ENCODE measurements at regions of chr10 and their contacts with region 1.

Region 1: GRCh38 chr10:30059209-30060107 is at the start of gene JCAD:
- DNase-seq: no peak
- H3K4me3 ChIP-seq: peak within 1 kb of the TSS; percentile 75 to 94 (median 92)
- H3K27ac ChIP-seq: peak within 1 kb of the TSS; percentile 86 to 90 (median 88)
- H3K4me1 ChIP-seq: peaks cover 6 to 56% (median 52%) of the 10 kb centered on the region in 4 donors
- H3K27me3 ChIP-seq: no peaks in the 10 kb centered on the region
- CTCF ChIP-seq: peak in 1 of 3 experiments; percentile 16
- EP300 ChIP-seq: no peak
- POLR2A ChIP-seq: peak; percentile 42
- total RNA-seq, gene JCAD: 33.6 to 65.2 (median 53.3) TPM

Region 2: DNA sequence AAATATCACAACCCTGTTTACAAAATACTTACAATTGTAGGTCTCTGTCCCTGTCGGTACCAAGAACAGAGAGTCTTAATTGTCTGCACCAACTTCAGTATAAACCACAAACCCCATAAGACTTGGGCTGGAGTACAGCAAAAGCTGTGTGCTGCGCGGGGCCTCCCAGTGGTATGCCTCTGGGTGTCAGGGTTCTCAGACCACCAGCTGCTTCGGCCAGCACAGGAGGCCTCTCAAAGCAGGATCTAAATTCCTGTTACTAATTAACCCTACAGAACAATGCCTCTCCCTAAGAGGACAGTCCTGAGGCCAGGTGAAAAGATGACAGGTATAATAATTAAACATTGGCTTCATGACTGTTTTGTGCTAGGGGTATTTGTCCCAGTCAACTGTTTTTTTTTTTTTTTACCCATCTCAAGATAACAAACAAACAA is 423.7 kb before region 1 on chr10:
- intact Hi-C with region 1: no loop called
- DNase-seq: no peak
- H3K4me3 ChIP-seq: no peak overlapping the region
- H3K27ac ChIP-seq: peak overlapping the region; percentile 80 to 94 (median 88)
- H3K4me1 ChIP-seq: peaks cover 21 to 79% (median 64%) of the 10 kb centered on the region in 4 donors
- H3K27me3 ChIP-seq: no peaks in the 10 kb centered on the region
- CTCF ChIP-seq: no peak
- EP300 ChIP-seq: no peak
- POLR2A ChIP-seq: no peak

Region 3: GRCh38 chr10:30186371-30186875 is 127.0 kb after region 1 on chr10:
- intact Hi-C with region 1: loop called (anchors 10 kb)
- DNase-seq: no peak
- H3K4me3 ChIP-seq: peak overlapping the region in 2 of 4 donors; percentile 2 to 12
- H3K27ac ChIP-seq: peak overlapping the region in 3 of 4 donors; percentile 23 to 66 (median 50)
- H3K4me1 ChIP-seq: peaks cover 19 to 38% (median 33%) of the 10 kb centered on the region in 4 donors
- H3K27me3 ChIP-seq: no peaks in the 10 kb centered on the region
- CTCF ChIP-seq: no peak
- EP300 ChIP-seq: no peak
- POLR2A ChIP-seq: no peak